Dendritic cell treated with granulocyte-macrophage colony-stimulating factor and Interleukin-4, amounts not matched to agents 40 ng/mL and 50 ng/mL, for 4 days (primary cell): ENCODE measurements at regions of chr15 and their contacts with region 1.

Region 1: GRCh38 chr15:25863111-25863967 is at the start of gene ATP10A:
- H3K4me3 Mint-ChIP-seq: peak within 1 kb of the TSS; percentile 79
- H3K27ac Mint-ChIP-seq: peak within 1 kb of the TSS; percentile 63
- H3K4me1 Mint-ChIP-seq: peaks cover 45% of the 10 kb centered on the region
- H3K27me3 Mint-ChIP-seq: peaks cover 70% of the 10 kb centered on the region

Region 2: GRCh38 chr15:25739687-25740121 is 123.6 kb before region 1 on chr15:
- intact Hi-C with region 1: loop called (anchors 10 kb)
- H3K4me3 Mint-ChIP-seq: no peak overlapping the region
- H3K27ac Mint-ChIP-seq: no peak overlapping the region
- H3K4me1 Mint-ChIP-seq: peaks cover 30% of the 10 kb centered on the region
- H3K27me3 Mint-ChIP-seq: peaks cover 22% of the 10 kb centered on the region

Region 3: GRCh38 chr15:25793354-25794050 is 69.8 kb before region 1 on chr15:
- intact Hi-C with region 1: loop called (anchors 2 kb)
- H3K4me3 Mint-ChIP-seq: peak overlapping the region; percentile 6
- H3K27ac Mint-ChIP-seq: peak overlapping the region; percentile 79
- H3K4me1 Mint-ChIP-seq: peaks cover 99% of the 10 kb centered on the region
- H3K27me3 Mint-ChIP-seq: peaks cover 15% of the 10 kb centered on the region

Region 4: GRCh38 chr15:25811481-25811906 is 51.8 kb before region 1 on chr15:
- intact Hi-C with region 1: loop called (anchors 5 kb)
- H3K4me3 Mint-ChIP-seq: no peak overlapping the region
- H3K27ac Mint-ChIP-seq: peak overlapping the region; percentile 58
- H3K4me1 Mint-ChIP-seq: peaks cover 15% of the 10 kb centered on the region
- H3K27me3 Mint-ChIP-seq: peaks cover 38% of the 10 kb centered on the region

Region 5: GRCh38 chr15:26191193-26191592 is 327.9 kb after region 1 on chr15:
- intact Hi-C with region 1: no loop called
- H3K4me3 Mint-ChIP-seq: no peak overlapping the region
- H3K27ac Mint-ChIP-seq: no peak overlapping the region
- H3K4me1 Mint-ChIP-seq: no peaks in the 10 kb centered on the region
- H3K27me3 Mint-ChIP-seq: no peaks in the 10 kb centered on the region